ENCODE measurements at regions of chr12 and their contacts with region 1.

Region 1: DNA sequence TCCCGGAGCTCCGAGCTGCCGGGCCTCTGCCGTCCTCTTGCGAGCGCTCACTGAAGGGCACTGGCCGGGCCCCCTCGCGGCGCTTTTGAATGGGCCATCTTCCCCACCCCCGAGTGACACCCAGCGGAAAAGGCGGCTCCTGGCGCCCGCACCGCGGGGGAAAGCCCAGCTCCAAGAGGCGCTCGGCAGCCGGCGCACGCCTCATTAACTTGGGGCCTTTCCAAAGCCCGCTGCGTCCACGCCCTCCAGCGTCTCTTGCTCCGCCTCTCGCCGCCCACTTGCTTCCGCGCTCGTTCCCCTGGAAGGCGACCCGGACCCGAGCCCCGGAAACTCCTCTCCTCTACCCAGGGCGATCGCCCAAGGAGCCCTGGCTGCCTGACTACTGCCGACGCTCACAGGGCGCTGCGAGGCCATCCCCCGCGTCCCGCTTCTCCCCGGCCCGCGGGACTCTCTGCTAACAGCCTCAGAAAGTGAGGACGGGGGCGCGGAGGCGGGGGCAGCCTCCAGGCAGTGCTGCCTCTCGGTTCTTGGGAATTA is at the start of gene PHLDA1:
- DNase-seq: peak; percentile 75 to 96 (median 90)
- H3K4me3 ChIP-seq: peak within 1 kb of the TSS; percentile 83
- H3K4me3 Mint-ChIP-seq: peak within 1 kb of the TSS; percentile 88 to 98 (median 94)
- H3K27ac ChIP-seq: peak within 1 kb of the TSS; percentile 86
- H3K27ac Mint-ChIP-seq: peak within 1 kb of the TSS; percentile 86 to 97 (median 96)
- H3K4me1 ChIP-seq: peaks cover 19% of the 10 kb centered on the region
- H3K4me1 Mint-ChIP-seq: peaks cover 23 to 52% (median 35%) of the 10 kb centered on the region in 3 donors
- H3K27me3 ChIP-seq: no peaks in the 10 kb centered on the region
- H3K27me3 Mint-ChIP-seq: no peaks in the 10 kb centered on the region
- total RNA-seq, gene PHLDA1: 43.3 to 43.4 TPM

Region 2: GRCh38 chr12:75814851-75815754 is 216.5 kb before region 1 on chr12:
- CTCF ChIA-PET with region 1: interaction called, 24 read pairs
- POLR2A ChIA-PET with region 1: interaction called, 5 read pairs
- DNase-seq: peak in 1 of 5 donors; percentile 32
- H3K4me3 ChIP-seq: no peak overlapping the region
- H3K4me3 Mint-ChIP-seq: no peak overlapping the region
- H3K27ac ChIP-seq: no peak overlapping the region
- H3K27ac Mint-ChIP-seq: peak overlapping the region; percentile 27 to 87 (median 54)
- H3K4me1 ChIP-seq: no peaks in the 10 kb centered on the region
- H3K4me1 Mint-ChIP-seq: peaks cover 17 to 36% (median 20%) of the 10 kb centered on the region in 3 donors
- H3K27me3 ChIP-seq: no peaks in the 10 kb centered on the region
- H3K27me3 Mint-ChIP-seq: no peaks in the 10 kb centered on the region

Region 3: DNA sequence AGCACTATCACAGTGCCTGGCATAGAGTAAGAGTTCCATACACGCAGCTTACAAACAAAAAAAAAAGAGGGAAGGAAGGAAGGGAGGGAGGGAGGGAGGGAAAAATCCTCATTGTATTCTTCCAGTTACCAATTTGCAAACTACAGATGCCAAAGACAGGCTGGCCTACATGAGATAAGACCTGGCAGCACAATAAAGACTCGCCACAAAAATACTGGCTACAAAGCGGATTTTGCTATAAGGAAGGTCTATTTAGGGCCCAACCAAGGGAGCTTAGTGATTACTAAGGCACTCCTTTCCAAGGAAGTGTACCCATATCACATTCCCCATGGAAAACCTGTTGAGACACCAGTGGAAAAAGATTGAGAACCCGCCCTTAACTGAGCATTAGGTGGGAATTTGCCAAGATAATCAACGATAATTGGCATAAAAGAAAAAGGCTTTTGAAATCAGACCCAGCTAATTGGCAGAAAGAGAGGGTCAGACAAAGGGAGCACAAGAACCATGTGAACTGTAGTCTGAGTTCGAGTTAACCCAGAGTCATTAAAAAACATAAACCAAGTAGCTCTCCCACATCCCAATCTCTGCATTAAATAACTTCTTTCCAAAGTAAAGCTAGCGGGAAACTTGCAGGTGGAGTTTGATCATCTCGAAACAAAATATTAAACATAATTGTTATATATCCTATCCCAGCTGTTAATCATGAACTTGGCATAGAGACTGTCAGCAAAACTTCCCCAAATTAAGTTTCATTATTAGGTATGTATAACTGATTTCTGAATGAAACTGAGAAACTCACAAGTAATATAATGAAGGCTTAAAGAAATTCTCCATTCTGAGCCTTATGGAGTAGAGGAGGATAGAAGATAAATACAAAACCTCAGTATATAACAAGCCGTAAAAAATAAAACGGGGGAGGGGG is 50.1 kb before region 1 on chr12:
- CTCF ChIA-PET with region 1: interaction called, 11 read pairs
- POLR2A ChIA-PET with region 1: interaction called, 3 read pairs
- DNase-seq: no peak
- H3K4me3 ChIP-seq: no peak overlapping the region
- H3K4me3 Mint-ChIP-seq: no peak overlapping the region
- H3K27ac ChIP-seq: no peak overlapping the region
- H3K27ac Mint-ChIP-seq: peak overlapping the region in 1 of 8 donors; percentile 24
- H3K4me1 ChIP-seq: peaks cover 25% of the 10 kb centered on the region
- H3K4me1 Mint-ChIP-seq: peaks cover 40 to 61% (median 59%) of the 10 kb centered on the region in 3 donors
- H3K27me3 ChIP-seq: no peaks in the 10 kb centered on the region
- H3K27me3 Mint-ChIP-seq: peaks cover 0 to 2% of the 10 kb centered on the region in 2 donors

Region 4: GRCh38 chr12:76020731-76021672 is 10.6 kb before region 1 on chr12:
- CTCF ChIA-PET with region 1: interaction called, 66 read pairs
- POLR2A ChIA-PET with region 1: interaction called, 77 read pairs
- DNase-seq: peak; percentile 52 to 86 (median 70)
- H3K4me3 ChIP-seq: peak overlapping the region; percentile 6
- H3K4me3 Mint-ChIP-seq: peak overlapping the region; percentile 46 to 79 (median 69)
- H3K27ac ChIP-seq: peak overlapping the region; percentile 86
- H3K27ac Mint-ChIP-seq: peak overlapping the region; percentile 96 to 100 (median 99)
- H3K4me1 ChIP-seq: peaks cover 30% of the 10 kb centered on the region
- H3K4me1 Mint-ChIP-seq: peaks cover 34 to 54% (median 46%) of the 10 kb centered on the region in 3 donors
- H3K27me3 ChIP-seq: no peaks in the 10 kb centered on the region
- H3K27me3 Mint-ChIP-seq: no peaks in the 10 kb centered on the region

Region 5: DNA sequence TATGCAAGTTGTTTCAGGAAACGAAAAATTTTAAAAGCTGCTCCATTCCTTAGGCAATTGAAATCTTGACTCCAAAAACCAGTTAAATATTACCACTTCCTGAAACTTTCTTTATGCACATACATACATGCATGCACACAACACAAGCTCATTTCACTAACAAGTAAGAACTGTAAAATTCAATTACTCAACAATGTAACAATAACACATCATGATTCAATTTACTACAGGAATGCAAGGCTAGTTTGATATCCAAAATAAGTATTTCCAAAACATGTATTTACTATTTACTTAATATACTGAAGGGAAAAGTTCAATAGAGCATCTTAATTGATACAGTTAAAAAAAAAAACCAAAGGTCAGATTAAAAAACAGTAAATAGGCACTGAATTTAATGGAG is 33.3 kb after region 1 on chr12:
- CTCF ChIA-PET with region 1: no interaction called
- POLR2A ChIA-PET with region 1: no interaction called
- DNase-seq: no peak
- H3K4me3 ChIP-seq: no peak overlapping the region
- H3K4me3 Mint-ChIP-seq: peak overlapping the region in 1 of 7 donors; percentile 24
- H3K27ac ChIP-seq: no peak overlapping the region
- H3K27ac Mint-ChIP-seq: peak overlapping the region in 2 of 8 donors; percentile 3 to 80
- H3K4me1 ChIP-seq: no peaks in the 10 kb centered on the region
- H3K4me1 Mint-ChIP-seq: peaks cover 30 to 71% (median 49%) of the 10 kb centered on the region in 3 donors
- H3K27me3 ChIP-seq: no peaks in the 10 kb centered on the region
- H3K27me3 Mint-ChIP-seq: no peaks in the 10 kb centered on the region